Posterior vena cava (tissue), 2 donors: ENCODE measurements at regions of chr7 and their contacts with region 1.

Region 1: DNA sequence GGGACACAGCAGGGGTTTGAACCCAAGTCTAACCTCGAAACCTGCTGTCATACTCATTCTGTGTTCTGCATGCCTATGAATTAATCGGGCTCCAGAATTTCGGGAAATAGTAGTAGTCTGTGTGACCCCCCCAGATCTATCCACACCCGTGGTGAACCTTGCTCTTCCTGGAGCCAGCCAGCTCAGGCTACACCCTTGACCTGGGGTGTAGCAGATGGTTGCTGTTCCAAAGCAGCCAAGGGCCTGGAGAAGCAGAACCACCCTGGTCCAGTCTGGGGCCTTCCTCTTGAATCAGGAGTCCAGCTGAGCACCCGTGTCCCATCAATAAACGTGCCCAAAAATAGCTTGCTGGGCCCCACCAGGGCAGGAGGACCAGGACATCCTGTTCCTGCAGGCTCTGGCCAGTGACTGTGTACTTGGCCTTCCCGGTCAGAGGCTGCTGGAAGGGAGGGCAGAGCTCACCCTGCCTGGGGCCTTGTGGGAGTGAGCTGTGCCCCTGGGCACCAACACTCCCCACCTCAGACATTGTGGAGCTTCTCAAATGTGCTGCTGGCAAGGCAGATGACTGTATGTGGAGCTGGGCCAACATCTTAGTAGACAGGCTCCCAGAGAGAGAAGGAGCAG is 101.2 kb upstream of the ZNF716 start:
- DNase-seq: no peak

Region 2: DNA sequence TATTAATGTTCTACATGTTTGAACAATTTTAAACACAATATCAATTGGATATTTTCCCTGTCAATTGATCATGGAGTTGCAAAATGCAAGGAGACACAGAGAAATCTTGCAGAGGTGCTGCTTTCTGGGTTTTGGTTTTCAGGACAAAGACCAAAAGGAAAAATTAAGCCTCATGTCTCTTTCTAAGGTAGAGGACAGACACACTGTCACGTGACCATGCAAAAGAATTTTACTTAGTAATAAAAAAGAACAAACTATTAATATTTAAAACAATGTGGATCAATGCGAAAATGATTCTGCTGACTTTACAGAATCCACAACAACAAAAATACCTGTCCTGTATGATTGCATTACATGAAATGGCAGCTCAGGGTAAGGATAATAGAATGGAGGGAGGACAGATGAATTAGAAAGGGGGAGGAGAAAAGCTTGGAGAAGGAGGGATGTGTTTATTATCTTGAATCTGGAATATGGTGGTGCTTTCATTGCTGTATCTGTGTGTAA is 738.9 kb before region 1 on chr7:
- intact Hi-C with region 1: loop called in 1 of 2 experiments (anchors 5 kb)
- DNase-seq: no peak